GM12878 (cell line): ENCODE measurements at regions of chr5 and their contacts with region 1.

Region 1: DNA sequence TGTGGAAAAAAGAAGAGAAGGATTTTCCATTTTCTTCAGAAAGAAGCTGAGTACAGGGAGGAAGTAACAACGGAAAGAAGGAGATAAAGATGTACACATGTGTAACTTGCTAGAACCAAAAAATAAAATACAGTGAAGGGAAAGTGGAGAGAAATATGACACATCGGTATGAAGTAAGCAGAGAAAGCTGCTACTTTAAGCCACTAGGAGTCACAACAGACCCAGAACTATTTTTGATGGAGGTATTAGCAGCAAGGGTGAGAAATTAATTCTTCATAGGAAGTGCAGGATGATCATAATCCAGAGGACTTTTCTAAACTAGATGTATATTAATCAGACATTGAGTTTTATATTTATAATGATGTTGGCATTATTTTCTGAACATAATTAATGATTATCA is 88.5 kb downstream of the FAM174A start:
- DNase-seq: no peak
- ATAC-seq: peak; percentile 96
- H3K4me3 ChIP-seq: no peak overlapping the region
- H3K27ac ChIP-seq: no peak overlapping the region
- H3K4me1 ChIP-seq: no peaks in the 10 kb centered on the region
- H3K27me3 ChIP-seq: no peaks in the 10 kb centered on the region
- CTCF ChIP-seq: peak; percentile 62 to 67 (median 62)
- EP300 ChIP-seq: no peak
- POLR2A ChIP-seq: no peak
- RAD21 ChIP-seq: peak; percentile 92

Region 2: DNA sequence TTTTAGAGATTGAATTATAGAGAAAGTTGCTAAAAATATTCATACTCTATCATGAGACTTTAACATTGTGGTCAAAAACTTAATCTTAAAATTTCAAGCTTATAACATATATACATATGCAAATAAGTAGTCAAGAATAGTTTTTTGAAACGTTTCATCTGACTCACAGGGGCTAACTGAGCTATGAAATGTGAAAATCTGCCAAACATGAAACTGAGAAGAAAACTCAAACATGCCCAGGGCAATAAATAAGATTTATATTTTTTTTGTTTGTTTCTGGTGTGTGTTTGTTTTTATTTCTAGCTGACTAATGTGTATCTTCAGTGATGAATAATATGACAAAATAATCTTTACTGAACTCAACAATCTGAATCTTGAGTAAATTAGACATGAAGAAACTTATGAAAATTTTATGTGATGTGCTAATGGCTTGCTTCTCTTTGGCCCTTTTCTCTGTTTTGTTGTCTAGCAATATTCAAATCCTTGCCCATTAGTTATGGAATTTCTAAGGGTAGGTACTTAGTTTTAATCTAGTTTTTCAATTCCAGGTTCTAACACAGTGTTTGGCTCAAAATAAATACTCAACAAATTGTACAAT is 11.3 kb after region 1 on chr5:
- CTCF ChIA-PET with region 1: interaction called, 8 read pairs
- POLR2A ChIA-PET with region 1: no interaction called
- RAD21 ChIA-PET with region 1: no interaction called
- SMC1A ChIA-PET with region 1: interaction called, 11 read pairs
- in situ Hi-C with region 1: no loop called
- intact Hi-C with region 1: no loop called
- DNase-seq: no peak
- ATAC-seq: peak; percentile 86
- H3K4me3 ChIP-seq: no peak overlapping the region
- H3K27ac ChIP-seq: peak overlapping the region; percentile 33; the same call in 1 of the 2 replicates
- H3K4me1 ChIP-seq: no peaks in the 10 kb centered on the region
- H3K27me3 ChIP-seq: no peaks in the 10 kb centered on the region
- CTCF ChIP-seq: no peak
- EP300 ChIP-seq: no peak
- POLR2A ChIP-seq: no peak
- RAD21 ChIP-seq: no peak

Region 3: GRCh38 chr5:101045689-101046088 is 422.0 kb after region 1 on chr5:
- CTCF ChIA-PET with region 1: no interaction called
- POLR2A ChIA-PET with region 1: no interaction called
- RAD21 ChIA-PET with region 1: interaction called, 7 read pairs
- SMC1A ChIA-PET with region 1: interaction called, 19 read pairs
- in situ Hi-C with region 1: no loop called
- intact Hi-C with region 1: loop called (anchors 2 kb)
- DNase-seq: no peak
- ATAC-seq: peak; percentile 55
- H3K4me3 ChIP-seq: no peak overlapping the region
- H3K27ac ChIP-seq: no peak overlapping the region
- H3K4me1 ChIP-seq: no peaks in the 10 kb centered on the region
- H3K27me3 ChIP-seq: no peaks in the 10 kb centered on the region
- CTCF ChIP-seq: peak in 1 of 3 experiments; percentile 5; a peak in 2 of 6 replicates
- EP300 ChIP-seq: no peak
- POLR2A ChIP-seq: no peak
- RAD21 ChIP-seq: peak; percentile 70

Region 4: GRCh38 chr5:101390151-101390908 is 766.6 kb after region 1 on chr5:
- CTCF ChIA-PET with region 1: interaction called, 13 read pairs
- POLR2A ChIA-PET with region 1: no interaction called
- RAD21 ChIA-PET with region 1: interaction called, 8 read pairs
- SMC1A ChIA-PET with region 1: interaction called, 10 read pairs
- in situ Hi-C with region 1: loop called (anchors 25 kb)
- intact Hi-C with region 1: loop called (anchors 2 kb)
- DNase-seq: peak; percentile 12
- ATAC-seq: peak; percentile 57
- H3K4me3 ChIP-seq: no peak overlapping the region
- H3K27ac ChIP-seq: no peak overlapping the region
- H3K4me1 ChIP-seq: no peaks in the 10 kb centered on the region
- H3K27me3 ChIP-seq: no peaks in the 10 kb centered on the region
- CTCF ChIP-seq: peak; percentile 42 to 67 (median 58); a peak in 5 of 6 replicates
- EP300 ChIP-seq: no peak
- POLR2A ChIP-seq: no peak
- RAD21 ChIP-seq: peak; percentile 68